Prostate gland (tissue), 2 donors: ENCODE measurements at regions of chr5 and their contacts with region 1.

Region 1: GRCh38 chr5:138226910-138227309 is 13.8 kb upstream of the CDC23 start:
- DNase-seq: no peak
- H3K4me3 ChIP-seq: no peak overlapping the region
- H3K27ac ChIP-seq: no peak overlapping the region
- H3K4me1 ChIP-seq: no peaks in the 10 kb centered on the region
- H3K27me3 ChIP-seq: no peaks in the 10 kb centered on the region
- CTCF ChIP-seq: no peak
- POLR2A ChIP-seq: no peak

Region 2: DNA sequence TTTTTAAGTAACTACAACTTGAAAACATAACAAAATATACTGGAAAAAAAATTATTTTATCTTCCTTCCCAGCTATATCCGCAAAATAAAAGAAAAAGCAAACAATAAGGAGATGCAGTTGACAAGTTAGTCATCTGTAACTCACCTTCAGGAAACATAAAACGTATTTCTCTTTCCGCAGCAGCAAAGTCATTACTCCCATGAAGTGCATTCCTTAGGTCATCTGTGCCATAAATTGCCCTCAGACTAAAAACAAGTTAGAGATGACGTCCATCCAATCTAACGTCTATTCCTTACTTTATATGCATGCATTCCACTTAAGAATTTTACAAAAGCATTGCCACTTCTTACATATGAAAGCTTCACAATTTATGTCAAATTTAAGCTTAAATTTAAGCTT is 98.6 kb before region 1 on chr5:
- intact Hi-C with region 1: no loop called
- DNase-seq: no peak
- H3K4me3 ChIP-seq: no peak overlapping the region
- H3K27ac ChIP-seq: no peak overlapping the region
- H3K4me1 ChIP-seq: no peaks in the 10 kb centered on the region
- H3K27me3 ChIP-seq: no peaks in the 10 kb centered on the region
- CTCF ChIP-seq: no peak
- POLR2A ChIP-seq: no peak

Region 3: GRCh38 chr5:138282920-138283742 is 56.2 kb after region 1 on chr5:
- intact Hi-C with region 1: loop called (anchors 5 kb)
- DNase-seq: peak; percentile 60
- H3K4me3 ChIP-seq: no peak overlapping the region
- H3K27ac ChIP-seq: no peak overlapping the region
- H3K4me1 ChIP-seq: no peaks in the 10 kb centered on the region
- H3K27me3 ChIP-seq: no peaks in the 10 kb centered on the region
- CTCF ChIP-seq: peak in 2 of 4 experiments; percentile 55 to 79
- POLR2A ChIP-seq: no peak

Region 4: GRCh38 chr5:138408023-138408422 is 181.1 kb after region 1 on chr5:
- intact Hi-C with region 1: loop called (anchors 5 kb)
- DNase-seq: no peak
- H3K4me3 ChIP-seq: no peak overlapping the region
- H3K27ac ChIP-seq: no peak overlapping the region
- H3K4me1 ChIP-seq: no peaks in the 10 kb centered on the region
- H3K27me3 ChIP-seq: no peaks in the 10 kb centered on the region
- CTCF ChIP-seq: no peak
- POLR2A ChIP-seq: no peak

Region 5: DNA sequence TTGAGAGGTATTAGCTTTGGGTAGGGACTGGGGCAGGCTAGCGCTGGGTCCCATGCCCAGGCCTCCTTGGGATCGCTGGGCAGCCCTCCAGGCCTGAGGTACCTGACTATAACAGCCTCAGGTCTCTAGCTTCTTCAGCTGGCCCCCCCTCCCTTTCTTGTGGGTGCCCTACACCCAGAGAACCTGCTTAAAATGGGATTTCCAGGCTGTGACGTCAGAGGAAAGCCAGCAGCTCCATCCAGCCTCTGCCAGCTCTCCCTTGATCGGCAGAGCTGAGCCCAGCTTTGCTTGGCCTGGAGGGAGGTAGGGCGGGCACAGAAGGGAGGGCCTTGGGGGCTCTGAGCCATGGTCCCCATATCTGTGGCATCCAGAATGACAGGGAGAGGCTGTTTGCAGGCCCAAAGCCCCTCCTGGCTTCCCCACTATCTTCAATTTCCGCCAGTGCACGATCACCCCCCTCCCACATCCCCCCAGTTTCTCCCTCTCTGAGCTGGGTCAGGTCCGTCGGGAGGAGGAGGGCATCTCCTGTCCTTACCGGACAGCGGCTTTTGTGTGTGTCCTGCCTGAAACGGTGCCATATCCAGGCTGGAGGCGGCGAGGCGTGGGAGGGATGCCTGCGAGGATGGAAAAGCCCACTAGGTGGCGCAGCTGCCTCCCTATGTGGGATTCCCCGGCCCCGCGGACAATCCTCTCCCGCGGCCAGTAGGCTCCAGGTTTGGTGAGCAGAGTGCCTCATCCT is 222.8 kb after region 1 on chr5:
- intact Hi-C with region 1: no loop called
- DNase-seq: peak; percentile 87
- H3K4me3 ChIP-seq: no peak overlapping the region
- H3K27ac ChIP-seq: peak overlapping the region in 1 of 2 donors; percentile 26
- H3K4me1 ChIP-seq: peaks cover 5% of the 10 kb centered on the region
- H3K27me3 ChIP-seq: no peaks in the 10 kb centered on the region
- CTCF ChIP-seq: peak; percentile 86 to 98 (median 94)
- POLR2A ChIP-seq: no peak

Region 6: DNA sequence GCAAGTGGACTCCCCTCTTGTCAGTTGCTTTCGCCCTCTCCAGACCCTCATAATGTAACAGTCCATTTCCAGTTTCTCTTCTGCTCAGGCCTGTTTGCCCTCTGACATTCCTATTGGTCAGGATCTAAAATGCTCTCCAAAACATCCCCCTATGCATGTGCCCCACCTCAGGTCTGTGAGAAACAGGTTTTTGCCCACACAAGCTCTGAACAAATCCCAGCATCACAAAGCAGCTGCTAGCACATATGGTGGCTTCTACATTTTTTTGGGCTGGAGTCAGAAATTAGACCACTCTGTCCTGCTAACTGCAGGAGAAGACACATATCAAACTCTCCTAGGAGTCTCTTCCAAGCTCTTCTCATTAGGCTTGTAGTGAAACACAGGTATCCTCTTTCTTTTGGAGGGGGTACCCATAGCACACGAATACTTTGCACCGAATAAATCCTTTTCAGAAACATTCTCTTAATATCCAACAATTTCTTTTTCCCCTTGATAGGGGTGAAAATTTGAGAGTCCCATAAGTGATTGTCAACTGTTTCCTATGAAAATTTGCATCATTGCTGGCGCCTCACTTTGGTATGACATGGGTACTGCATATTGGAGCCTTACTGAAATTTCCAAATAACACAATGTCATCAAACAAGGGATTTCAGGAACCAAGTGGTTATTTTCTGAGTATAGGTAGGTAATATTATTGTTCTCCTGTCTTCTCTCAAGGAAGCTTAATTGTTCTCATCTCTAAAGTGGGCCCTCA is 367.6 kb after region 1 on chr5:
- intact Hi-C with region 1: no loop called
- DNase-seq: no peak
- H3K4me3 ChIP-seq: no peak overlapping the region
- H3K27ac ChIP-seq: no peak overlapping the region
- H3K4me1 ChIP-seq: no peaks in the 10 kb centered on the region
- H3K27me3 ChIP-seq: no peaks in the 10 kb centered on the region
- CTCF ChIP-seq: no peak
- POLR2A ChIP-seq: no peak